ENCODE measurements at regions of chr3 and their contacts with region 1.

Region 1: GRCh38 chr3:112074721-112075497 is 11.3 kb upstream of the C3orf52 start:
- DNase-seq: peak; percentile 79
- H3K4me3 Mint-ChIP-seq: peak overlapping the region; percentile 32
- H3K27ac Mint-ChIP-seq: peak overlapping the region; percentile 76
- H3K4me1 Mint-ChIP-seq: peaks cover 39% of the 10 kb centered on the region
- H3K27me3 Mint-ChIP-seq: no peaks in the 10 kb centered on the region

Region 2: GRCh38 chr3:111761309-111761831 is 313.5 kb before region 1 on chr3:
- CTCF ChIA-PET with region 1: no interaction called
- intact Hi-C with region 1: loop called (anchors 1 kb)
- DNase-seq: peak; percentile 54
- H3K4me3 Mint-ChIP-seq: no peak overlapping the region
- H3K27ac Mint-ChIP-seq: peak overlapping the region; percentile 68
- H3K4me1 Mint-ChIP-seq: peaks cover 18% of the 10 kb centered on the region
- H3K27me3 Mint-ChIP-seq: no peaks in the 10 kb centered on the region

Region 3: DNA sequence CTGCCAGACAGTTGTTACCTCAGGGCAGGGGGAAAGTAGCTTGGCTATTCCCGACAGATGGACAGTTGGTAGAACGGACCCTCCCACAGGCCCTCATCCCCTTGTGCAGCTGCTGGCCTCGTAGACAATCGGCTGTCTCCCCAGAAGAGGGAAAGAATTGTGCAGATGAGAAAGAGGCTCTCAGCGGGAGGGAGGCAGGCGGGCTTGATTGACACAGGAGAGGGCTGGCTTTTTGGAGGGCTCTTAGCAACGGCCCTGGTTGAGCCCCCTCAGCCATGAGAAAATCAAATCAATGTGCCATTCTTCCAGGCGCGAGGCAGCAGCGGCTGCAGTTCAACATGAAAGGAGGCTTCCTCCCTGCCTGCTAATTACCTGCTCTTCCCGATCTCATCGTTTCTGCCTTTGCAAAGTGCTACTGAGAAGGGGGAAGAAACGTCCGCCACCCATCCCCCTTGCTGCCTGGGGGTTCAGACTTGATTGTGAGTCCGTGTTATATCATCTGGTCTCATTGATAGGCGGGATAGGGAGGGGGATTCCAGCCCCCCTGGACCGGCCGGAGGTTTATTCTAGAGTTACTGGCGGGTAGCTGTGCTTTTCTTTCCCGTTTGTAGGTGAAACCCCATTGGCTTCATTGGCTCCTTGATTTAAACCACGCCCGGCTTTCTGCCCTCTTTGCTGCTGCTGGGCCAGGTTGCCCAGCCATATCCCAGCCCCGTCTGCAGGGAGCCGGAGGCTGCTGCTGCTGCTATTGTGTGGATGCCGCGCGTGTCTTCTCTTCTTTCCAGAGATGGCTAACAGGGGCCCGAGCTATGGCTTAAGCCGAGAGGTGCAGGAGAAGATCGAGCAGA is 76.0 kb before region 1 on chr3 and contains the start of gene TAGLN3:
- CTCF ChIA-PET with region 1: no interaction called
- intact Hi-C with region 1: loop called (anchors 1 kb)
- DNase-seq: peak; percentile 20
- H3K4me3 Mint-ChIP-seq: peak within 1 kb of the TSS; percentile 64
- H3K27ac Mint-ChIP-seq: no peak within 1 kb of the TSS
- H3K4me1 Mint-ChIP-seq: peaks cover 45% of the 10 kb centered on the region
- H3K27me3 Mint-ChIP-seq: no peaks in the 10 kb centered on the region
- total RNA-seq, gene TAGLN3: 1.2 TPM

Region 4: DNA sequence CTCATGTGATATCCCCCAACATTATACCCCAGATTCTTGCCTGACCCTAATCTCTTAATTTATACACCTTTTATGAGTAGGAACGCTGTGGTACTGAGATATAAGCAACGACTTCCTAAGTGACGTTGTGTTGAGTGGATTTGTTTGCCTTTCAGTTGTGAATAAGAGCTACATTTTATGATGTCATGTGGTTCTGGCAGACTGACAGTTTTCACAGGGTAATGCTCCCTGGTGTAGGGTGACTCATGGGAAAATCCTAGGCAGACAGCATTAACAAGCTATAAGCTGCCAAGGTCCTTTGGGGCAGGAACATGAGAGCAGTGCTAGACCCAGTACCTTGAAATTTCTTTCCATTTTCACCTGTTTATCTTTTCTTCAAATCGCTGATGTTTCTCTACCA is 22.5 kb after region 1 on chr3:
- CTCF ChIA-PET with region 1: no interaction called
- intact Hi-C with region 1: loop called (anchors 1 kb)
- DNase-seq: peak; percentile 71
- H3K4me3 Mint-ChIP-seq: no peak overlapping the region
- H3K27ac Mint-ChIP-seq: no peak overlapping the region
- H3K4me1 Mint-ChIP-seq: peaks cover 23% of the 10 kb centered on the region
- H3K27me3 Mint-ChIP-seq: no peaks in the 10 kb centered on the region

Region 5: GRCh38 chr3:112498914-112499711 is 424.2 kb after region 1 on chr3 and contains the start of gene BTLA:
- CTCF ChIA-PET with region 1: no interaction called
- intact Hi-C with region 1: loop called (anchors 5 kb)
- DNase-seq: peak; percentile 71
- H3K4me3 Mint-ChIP-seq: peak within 1 kb of the TSS; percentile 100
- H3K27ac Mint-ChIP-seq: peak within 1 kb of the TSS; percentile 100
- H3K4me1 Mint-ChIP-seq: peaks cover 51% of the 10 kb centered on the region
- H3K27me3 Mint-ChIP-seq: no peaks in the 10 kb centered on the region
- total RNA-seq, gene BTLA: 70.6 to 73.4 TPM